Activated CD4-positive, alpha-beta T cell treated with anti-CD3 and anti-CD28 coated beads for 36 hours (primary cell): ENCODE measurements at regions of chr18 and their contacts with region 1.

Region 1: GRCh38 chr18:34787931-34788532 is 77.9 kb downstream of the DTNA start:
- DNase-seq: peak; percentile 49
- ATAC-seq: peak; percentile 42
- H3K4me3 Mint-ChIP-seq: no peak overlapping the region
- H3K27ac Mint-ChIP-seq: no peak overlapping the region
- H3K4me1 Mint-ChIP-seq: peaks cover 13% of the 10 kb centered on the region
- H3K27me3 Mint-ChIP-seq: peaks cover 26% of the 10 kb centered on the region

Region 2: GRCh38 chr18:33231474-33232317 is 1556.3 kb before region 1 on chr18:
- CTCF ChIA-PET with region 1: interaction called, 4 read pairs
- POLR2A ChIA-PET with region 1: no interaction called
- intact Hi-C with region 1: loop called in 1 of 2 experiments (anchors 5 kb)
- DNase-seq: peak; percentile 80
- ATAC-seq: peak; percentile 80
- H3K4me3 Mint-ChIP-seq: no peak overlapping the region
- H3K27ac Mint-ChIP-seq: no peak overlapping the region
- H3K4me1 Mint-ChIP-seq: peaks cover 5% of the 10 kb centered on the region
- H3K27me3 Mint-ChIP-seq: no peaks in the 10 kb centered on the region

Region 3: DNA sequence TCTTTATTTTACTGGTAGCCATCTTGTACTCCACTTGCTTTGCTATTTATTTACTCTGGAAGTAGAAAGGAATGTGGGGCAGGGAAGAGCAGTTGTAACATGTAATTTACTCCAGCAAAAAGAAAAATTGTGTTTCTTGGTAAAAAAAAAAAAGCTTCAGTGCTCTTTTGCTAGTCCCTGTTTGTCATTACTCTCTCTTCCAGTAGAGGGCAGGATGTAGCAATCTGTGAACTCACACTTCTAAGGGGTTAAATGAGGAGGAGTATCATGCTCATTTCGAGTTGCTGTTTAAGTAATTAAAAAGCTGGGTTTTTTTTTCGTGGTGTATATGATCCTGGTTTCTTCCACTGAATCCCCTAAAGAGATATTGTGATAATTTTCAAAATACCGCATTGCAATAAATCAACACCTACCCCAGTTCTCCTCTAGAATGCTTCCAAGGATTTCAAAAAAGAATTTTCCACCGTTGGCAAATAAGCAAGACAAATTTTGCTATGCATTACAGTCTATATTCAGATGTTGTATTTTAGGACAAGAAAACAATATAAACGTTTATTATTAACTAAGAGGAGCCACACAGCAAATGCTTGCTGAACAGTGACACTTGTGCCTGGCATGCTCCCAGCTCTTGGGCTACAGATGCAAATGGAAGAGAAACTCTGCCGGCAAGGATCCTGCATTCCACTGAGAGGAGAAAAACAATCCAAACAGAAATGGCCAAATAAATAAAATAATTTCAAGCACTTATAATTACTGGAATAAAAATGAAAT is 948.4 kb before region 1 on chr18:
- CTCF ChIA-PET with region 1: no interaction called
- POLR2A ChIA-PET with region 1: no interaction called
- intact Hi-C with region 1: loop called in 1 of 2 experiments (anchors 5 kb)
- DNase-seq: no peak
- ATAC-seq: no peak
- H3K4me3 Mint-ChIP-seq: no peak overlapping the region
- H3K27ac Mint-ChIP-seq: no peak overlapping the region
- H3K4me1 Mint-ChIP-seq: no peaks in the 10 kb centered on the region
- H3K27me3 Mint-ChIP-seq: no peaks in the 10 kb centered on the region

Region 4: GRCh38 chr18:34122724-34123334 is 665.2 kb before region 1 on chr18:
- CTCF ChIA-PET with region 1: interaction called, 6 read pairs
- POLR2A ChIA-PET with region 1: no interaction called
- intact Hi-C with region 1: loop called (anchors 1 to 2 kb)
- DNase-seq: peak; percentile 23
- ATAC-seq: no peak
- H3K4me3 Mint-ChIP-seq: no peak overlapping the region
- H3K27ac Mint-ChIP-seq: no peak overlapping the region
- H3K4me1 Mint-ChIP-seq: no peaks in the 10 kb centered on the region
- H3K27me3 Mint-ChIP-seq: no peaks in the 10 kb centered on the region

Region 5: DNA sequence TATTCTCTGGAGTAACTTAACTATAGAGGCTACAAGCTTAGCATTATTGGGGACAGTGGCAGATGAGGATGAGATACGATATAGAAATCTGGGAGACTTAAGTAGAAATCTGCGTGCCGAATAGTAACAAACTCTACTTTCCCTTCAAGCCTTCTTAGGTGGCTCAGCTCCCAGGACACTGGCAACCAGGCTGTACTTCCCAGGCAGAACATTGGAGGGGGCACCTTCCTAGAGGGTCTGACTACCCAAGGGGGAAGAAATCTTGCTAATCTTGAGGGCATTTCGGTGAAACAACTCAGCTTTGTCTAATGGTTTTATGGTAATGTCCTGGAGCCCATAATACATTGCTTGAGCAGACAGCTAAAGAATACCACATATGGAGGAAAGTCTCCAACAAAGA is 204.1 kb before region 1 on chr18:
- CTCF ChIA-PET with region 1: no interaction called
- POLR2A ChIA-PET with region 1: no interaction called
- intact Hi-C with region 1: no loop called
- DNase-seq: no peak
- ATAC-seq: no peak
- H3K4me3 Mint-ChIP-seq: no peak overlapping the region
- H3K27ac Mint-ChIP-seq: no peak overlapping the region
- H3K4me1 Mint-ChIP-seq: no peaks in the 10 kb centered on the region
- H3K27me3 Mint-ChIP-seq: peaks cover 4% of the 10 kb centered on the region

Region 6: GRCh38 chr18:34661464-34662111 is 126.4 kb before region 1 on chr18:
- CTCF ChIA-PET with region 1: interaction called, 21 read pairs
- POLR2A ChIA-PET with region 1: no interaction called
- intact Hi-C with region 1: loop called (anchors 1 kb)
- DNase-seq: no peak
- ATAC-seq: peak; percentile 42
- H3K4me3 Mint-ChIP-seq: no peak overlapping the region
- H3K27ac Mint-ChIP-seq: no peak overlapping the region
- H3K4me1 Mint-ChIP-seq: no peaks in the 10 kb centered on the region
- H3K27me3 Mint-ChIP-seq: peaks cover 24% of the 10 kb centered on the region

Region 7: DNA sequence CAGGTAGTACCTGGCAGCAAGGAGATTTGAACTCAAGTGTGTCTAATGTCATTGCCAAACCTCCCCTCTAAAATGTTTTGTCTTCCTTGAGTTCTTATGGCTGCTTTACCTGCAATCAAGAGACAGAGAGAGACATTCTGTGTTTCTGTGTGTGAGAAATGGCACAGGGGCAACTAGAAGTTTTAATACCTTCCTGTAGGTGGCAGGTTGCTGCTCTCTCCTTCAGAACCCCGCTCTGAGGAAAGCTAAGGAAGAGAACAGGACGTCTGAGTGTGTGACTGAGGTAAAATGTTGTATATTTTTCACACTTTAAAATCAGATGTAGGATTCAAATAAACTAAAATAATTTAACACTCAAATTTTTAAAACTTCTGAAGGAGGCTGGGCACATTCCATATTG is 58.8 kb before region 1 on chr18:
- CTCF ChIA-PET with region 1: interaction called, 3 read pairs
- POLR2A ChIA-PET with region 1: no interaction called
- intact Hi-C with region 1: loop called (anchors 2 kb)
- DNase-seq: peak; percentile 18
- ATAC-seq: peak; percentile 75
- H3K4me3 Mint-ChIP-seq: no peak overlapping the region
- H3K27ac Mint-ChIP-seq: no peak overlapping the region
- H3K4me1 Mint-ChIP-seq: no peaks in the 10 kb centered on the region
- H3K27me3 Mint-ChIP-seq: peaks cover 11% of the 10 kb centered on the region

Region 8: DNA sequence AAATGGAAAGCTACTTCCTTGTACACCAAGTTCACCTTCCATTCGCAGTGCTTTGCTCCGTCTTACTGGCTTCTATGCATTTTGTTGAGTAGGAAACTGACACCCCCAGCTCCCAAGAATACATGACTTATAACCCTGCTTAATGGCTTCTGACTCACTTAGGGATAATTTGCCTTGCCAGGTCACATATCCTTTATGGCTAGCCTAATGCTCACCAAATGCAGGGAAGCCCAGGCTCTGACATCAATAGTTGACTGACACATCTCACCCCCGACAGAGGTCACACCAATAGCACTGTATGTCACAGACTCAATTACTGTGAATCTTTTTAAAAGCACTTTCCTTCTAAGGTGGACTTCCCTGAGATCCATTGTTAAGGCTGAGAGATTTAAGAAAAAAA is 69.3 kb after region 1 on chr18:
- CTCF ChIA-PET with region 1: no interaction called
- POLR2A ChIA-PET with region 1: no interaction called
- intact Hi-C with region 1: loop called in 1 of 2 experiments (anchors 10 kb)
- DNase-seq: no peak
- ATAC-seq: no peak
- H3K4me3 Mint-ChIP-seq: no peak overlapping the region
- H3K27ac Mint-ChIP-seq: peak overlapping the region; percentile 23
- H3K4me1 Mint-ChIP-seq: peaks cover 35% of the 10 kb centered on the region
- H3K27me3 Mint-ChIP-seq: peaks cover 20% of the 10 kb centered on the region